GM10248 (cell line): ENCODE measurements at regions of chr9 and their contacts with region 1.

Region 1: DNA sequence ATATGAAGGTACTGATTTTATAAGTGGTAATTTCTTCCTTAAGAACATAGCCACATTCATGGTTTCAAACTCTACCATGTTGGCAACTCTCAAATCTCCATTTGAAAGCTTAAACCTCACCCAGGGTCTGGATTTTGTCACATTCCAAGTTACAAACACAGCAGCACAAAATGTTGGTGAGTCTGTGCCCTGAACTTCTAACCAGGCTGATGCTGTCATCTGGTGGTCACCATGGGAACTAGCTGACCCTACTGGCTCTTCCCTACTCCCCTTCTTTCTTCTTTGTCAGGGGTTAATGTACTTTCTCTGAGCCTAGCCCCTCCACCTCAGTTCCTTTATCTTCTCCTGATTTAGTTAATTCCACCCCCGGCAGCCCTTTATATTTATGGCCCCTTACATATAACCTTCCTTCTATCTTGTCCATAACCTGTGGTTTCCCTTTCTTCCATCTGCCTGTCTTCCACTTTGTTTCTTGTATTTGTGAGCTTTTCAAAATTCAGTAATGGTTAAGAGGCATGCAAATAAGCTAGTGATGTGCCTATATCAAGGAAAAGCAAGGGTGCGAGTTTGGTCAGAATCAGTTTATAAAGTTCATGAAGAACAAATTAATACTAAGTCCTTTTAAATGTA is 35.9 kb downstream of the TGFBR1 start:
- DNase-seq: peak; percentile 50
- CTCF ChIP-seq: peak; percentile 83

Region 2: GRCh38 chr9:98974994-98975712 is 165.6 kb before region 1 on chr9:
- CTCF ChIA-PET with region 1: interaction called, 81 read pairs
- POLR2A ChIA-PET with region 1: no interaction called
- DNase-seq: peak; percentile 89
- CTCF ChIP-seq: peak; percentile 97

Region 3: GRCh38 chr9:98998441-98999151 is 142.2 kb before region 1 on chr9:
- CTCF ChIA-PET with region 1: interaction called, 60 read pairs
- POLR2A ChIA-PET with region 1: no interaction called
- DNase-seq: peak; percentile 73
- CTCF ChIP-seq: peak; percentile 94

Region 4: GRCh38 chr9:99104459-99105151 is 36.2 kb before region 1 on chr9 and contains the start of gene TGFBR1:
- CTCF ChIA-PET with region 1: interaction called, 21 read pairs
- POLR2A ChIA-PET with region 1: no interaction called
- DNase-seq: peak; percentile 98
- CTCF ChIP-seq: no peak

Region 5: GRCh38 chr9:99189186-99189585 is 48.4 kb after region 1 on chr9:
- CTCF ChIA-PET with region 1: no interaction called
- POLR2A ChIA-PET with region 1: no interaction called
- DNase-seq: no peak
- CTCF ChIP-seq: no peak